Natural killer cell (primary cell): ENCODE measurements at regions of chr17 and their contacts with region 1.

Region 1: DNA sequence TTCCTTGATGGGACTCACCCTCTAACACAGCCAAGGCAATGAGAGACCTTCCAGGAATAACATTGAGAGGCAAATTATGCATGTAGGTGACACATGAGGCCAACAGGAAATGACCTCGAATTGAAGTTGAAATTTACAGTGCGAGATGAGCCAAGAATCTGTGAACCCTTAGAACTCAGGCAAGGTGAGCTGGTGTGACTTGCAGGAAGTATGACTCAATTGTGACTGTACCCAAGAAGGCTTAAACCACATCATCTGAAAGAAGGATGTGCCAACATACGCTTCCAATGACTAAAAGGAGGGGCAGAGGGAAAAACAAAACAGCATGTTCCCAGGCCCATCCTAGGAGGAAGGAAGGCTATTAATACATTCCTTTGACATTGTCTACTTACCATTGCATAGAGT is 44.8 kb downstream of the PITPNC1 start:
- DNase-seq: peak in 1 of 2 donors; percentile 93
- ATAC-seq: peak; percentile 87 to 95 (median 95)
- H3K4me3 ChIP-seq: no peak overlapping the region
- H3K4me3 Mint-ChIP-seq: peak overlapping the region; percentile 67
- H3K27ac ChIP-seq: peak overlapping the region; percentile 80
- H3K27ac Mint-ChIP-seq: peak overlapping the region; percentile 88
- H3K4me1 ChIP-seq: peaks cover 62% of the 10 kb centered on the region
- H3K4me1 Mint-ChIP-seq: peaks cover 81 to 89% of the 10 kb centered on the region in 2 donors
- H3K27me3 ChIP-seq: no peaks in the 10 kb centered on the region
- H3K27me3 Mint-ChIP-seq: no peaks in the 10 kb centered on the region
- CTCF ChIP-seq: no peak

Region 2: GRCh38 chr17:67401598-67402488 is 20.0 kb before region 1 on chr17:
- intact Hi-C with region 1: loop called (anchors 2 kb)
- DNase-seq: peak in 1 of 2 donors; percentile 33
- ATAC-seq: peak in 2 of 3 donors; percentile 21 to 32
- H3K4me3 ChIP-seq: no peak overlapping the region
- H3K4me3 Mint-ChIP-seq: peak overlapping the region; percentile 75
- H3K27ac ChIP-seq: peak overlapping the region; percentile 86
- H3K27ac Mint-ChIP-seq: peak overlapping the region; percentile 93 to 97
- H3K4me1 ChIP-seq: peaks cover 48% of the 10 kb centered on the region
- H3K4me1 Mint-ChIP-seq: peaks cover 66 to 80% of the 10 kb centered on the region in 2 donors
- H3K27me3 ChIP-seq: no peaks in the 10 kb centered on the region
- H3K27me3 Mint-ChIP-seq: no peaks in the 10 kb centered on the region
- CTCF ChIP-seq: no peak